Right cardiac atrium (tissue), 5 donors: ENCODE measurements at regions of chr18 and their contacts with region 1.

Region 1: GRCh38 chr18:36561046-36561445 is 263.5 kb downstream of the FHOD3 start:
- DNase-seq: no peak
- ATAC-seq: no peak
- H3K4me3 ChIP-seq: no peak overlapping the region
- H3K27ac ChIP-seq: no peak overlapping the region
- H3K4me1 ChIP-seq: peaks cover 7% of the 10 kb centered on the region
- H3K27me3 ChIP-seq: no peaks in the 10 kb centered on the region

Region 2: DNA sequence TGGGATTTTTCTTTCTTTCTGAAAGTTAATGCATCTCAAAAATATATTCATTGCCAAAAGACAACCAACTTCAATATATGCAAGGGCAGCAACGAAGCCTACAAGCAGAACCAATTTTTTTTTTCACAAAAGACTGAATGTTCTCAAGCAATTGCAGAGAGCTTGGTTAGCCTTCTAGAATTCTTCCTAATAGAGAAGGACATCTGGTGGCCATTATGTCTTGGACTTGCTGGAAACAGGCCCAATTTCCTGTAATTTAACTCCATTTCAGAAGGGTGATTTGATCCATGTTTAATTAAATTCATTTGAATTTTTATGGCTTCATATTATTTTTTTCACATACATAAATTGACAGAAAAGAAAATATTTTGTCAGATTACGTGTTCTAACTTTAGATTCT is 59.7 kb after region 1 on chr18:
- intact Hi-C with region 1: loop called in 1 of 4 experiments (anchors 5 kb)
- DNase-seq: no peak
- ATAC-seq: no peak
- H3K4me3 ChIP-seq: no peak overlapping the region
- H3K27ac ChIP-seq: no peak overlapping the region
- H3K4me1 ChIP-seq: peaks cover 6% of the 10 kb centered on the region
- H3K27me3 ChIP-seq: no peaks in the 10 kb centered on the region